CD4-positive, alpha-beta T cell (primary cell): ENCODE measurements at regions of chr11 and their contacts with region 1.

Region 1: DNA sequence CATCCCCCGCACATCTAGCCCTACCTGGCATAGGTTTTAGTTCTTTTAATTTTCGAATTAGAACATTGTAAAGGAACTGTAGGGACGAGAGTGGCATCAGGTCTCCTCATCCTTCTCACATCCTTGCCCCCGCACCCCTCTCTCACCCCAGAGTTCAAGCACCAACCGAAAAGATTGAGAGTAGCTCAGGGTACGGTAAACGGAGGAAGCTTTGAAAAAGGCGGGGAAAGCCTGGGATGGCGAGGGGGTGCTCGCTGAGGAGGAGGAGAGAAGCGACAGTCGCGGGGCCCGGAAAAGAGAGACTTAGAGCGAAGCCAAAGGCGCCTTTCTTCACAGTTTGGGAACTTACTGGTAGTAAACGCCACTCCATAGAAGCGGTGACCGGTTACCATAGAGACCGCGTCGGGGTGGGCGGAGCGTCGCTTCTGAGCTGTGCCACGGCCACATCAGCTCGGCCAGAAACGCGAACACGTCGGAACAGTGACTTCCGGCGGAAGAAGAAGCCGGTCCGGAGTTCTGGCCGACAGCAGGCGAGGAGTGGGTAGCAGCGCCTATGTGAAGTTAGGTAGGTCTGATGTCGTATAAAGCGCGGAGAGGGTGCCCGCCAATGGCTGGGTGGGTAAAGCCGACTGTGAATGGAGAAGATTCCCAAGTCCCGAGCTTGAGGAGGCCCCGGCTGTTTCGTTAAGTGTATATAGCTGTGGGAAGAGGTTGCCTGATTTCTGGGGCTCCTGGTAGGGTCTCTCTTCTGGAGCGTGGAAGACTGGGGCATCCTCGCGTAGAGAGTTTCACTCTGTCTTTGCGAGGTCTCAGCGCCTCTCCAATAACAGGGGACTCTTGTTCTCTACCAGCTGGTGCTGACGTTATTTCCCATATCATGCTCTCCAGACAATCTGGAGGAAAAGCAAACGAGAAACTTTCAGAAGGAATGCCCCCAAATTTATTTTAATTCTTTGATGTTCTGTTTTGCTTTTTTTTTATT is at the starts of genes DCDC1 and DNAJC24:
- DNase-seq: peak; percentile 90 to 97 (median 91)
- ATAC-seq: peak; percentile 94
- H3K4me3 ChIP-seq: peak within 1 kb of the TSS; percentile 73
- H3K4me3 Mint-ChIP-seq: peak within 1 kb of the TSS; percentile 98
- H3K27ac ChIP-seq: peak within 1 kb of the TSS; percentile 56 to 73
- H3K27ac Mint-ChIP-seq: peak within 1 kb of the TSS; percentile 78
- H3K4me1 ChIP-seq: peaks cover 20% of the 10 kb centered on the region
- H3K4me1 Mint-ChIP-seq: peaks cover 77% of the 10 kb centered on the region
- H3K27me3 ChIP-seq: no peaks in the 10 kb centered on the region
- H3K27me3 Mint-ChIP-seq: no peaks in the 10 kb centered on the region
- CTCF ChIP-seq: no peak
- total RNA-seq, gene DCDC1: 0.11 TPM in 1 of 2 experiments, not detected in the other
- total RNA-seq, gene DNAJC24: 6.5 to 7.5 TPM

Region 2: DNA sequence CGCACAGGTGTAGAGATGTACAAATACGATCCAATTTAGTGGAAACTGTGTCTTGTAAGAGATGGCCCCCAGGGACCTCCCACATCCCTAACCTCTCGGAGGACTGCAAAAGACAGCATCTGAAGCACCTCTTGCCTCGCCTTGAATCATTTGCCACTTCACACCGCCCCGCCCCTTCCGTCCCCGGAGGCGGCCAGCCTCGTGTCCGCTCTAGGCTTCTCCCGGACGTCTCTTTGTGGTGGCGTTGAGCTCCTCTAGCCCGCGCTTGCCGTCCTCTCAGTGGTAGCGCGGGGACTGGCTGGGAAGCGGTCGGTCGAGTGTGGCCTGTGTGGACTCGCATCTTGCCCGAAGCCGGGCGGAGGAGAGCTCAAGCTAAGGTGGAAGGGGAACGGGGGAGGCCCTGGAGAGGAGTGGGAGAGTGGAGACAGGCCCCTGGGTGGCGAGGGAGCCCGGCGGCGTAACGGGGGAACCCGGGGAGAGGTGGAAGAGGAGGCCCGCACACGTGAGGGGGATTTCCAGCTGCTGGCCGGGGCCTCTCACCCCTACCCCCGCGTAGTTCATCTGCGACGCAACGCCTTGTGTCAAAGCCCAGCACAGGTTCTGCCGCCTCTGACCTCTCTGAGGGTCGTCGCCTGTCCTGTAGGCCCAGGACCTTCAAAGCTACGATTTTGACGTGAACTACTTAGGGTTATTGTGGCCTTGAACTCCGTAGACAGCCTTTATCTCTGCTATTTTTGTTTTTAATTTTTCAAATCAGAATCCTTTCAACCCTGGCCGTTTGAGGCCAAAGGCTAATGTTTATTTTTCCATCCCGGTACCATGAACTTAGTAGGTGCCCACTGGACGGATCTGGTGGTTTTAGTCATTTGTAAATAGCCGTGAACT is 1046.6 kb before region 1 on chr11 and contains the start of gene ARL14EP:
- CTCF ChIA-PET with region 1: no interaction called
- POLR2A ChIA-PET with region 1: interaction called, 6 read pairs
- intact Hi-C with region 1: loop called in 1 of 2 experiments (anchors 5 kb)
- DNase-seq: peak; percentile 75 to 93 (median 86)
- ATAC-seq: peak; percentile 82
- H3K4me3 ChIP-seq: peak within 1 kb of the TSS; percentile 89
- H3K4me3 Mint-ChIP-seq: peak within 1 kb of the TSS; percentile 98
- H3K27ac ChIP-seq: peak within 1 kb of the TSS; percentile 70 to 81
- H3K27ac Mint-ChIP-seq: peak within 1 kb of the TSS; percentile 97
- H3K4me1 ChIP-seq: peaks cover 22% of the 10 kb centered on the region
- H3K4me1 Mint-ChIP-seq: peaks cover 54% of the 10 kb centered on the region
- H3K27me3 ChIP-seq: no peaks in the 10 kb centered on the region
- H3K27me3 Mint-ChIP-seq: peaks cover 17% of the 10 kb centered on the region
- CTCF ChIP-seq: no peak
- total RNA-seq, gene ARL14EP: 48.1 to 49.7 TPM

Region 3: DNA sequence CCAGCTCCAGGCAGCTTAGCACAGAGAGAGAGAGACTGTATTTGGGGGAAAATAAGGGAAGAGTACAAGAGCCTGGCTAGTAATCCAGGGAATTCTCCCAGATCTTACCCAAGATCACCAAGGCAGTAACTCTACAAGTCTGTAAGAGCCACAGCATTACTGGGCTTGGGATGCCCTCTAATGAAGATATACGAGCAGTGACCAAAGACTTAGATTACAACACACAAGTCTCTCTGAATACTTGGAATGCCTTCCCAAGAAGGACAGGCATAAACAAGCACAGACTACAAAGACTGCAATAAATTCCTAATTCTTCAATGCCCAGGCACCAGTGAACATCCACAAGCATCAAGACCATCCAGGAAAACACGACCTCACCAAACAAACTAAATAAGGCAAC is 17.7 kb after region 1 on chr11:
- CTCF ChIA-PET with region 1: no interaction called
- POLR2A ChIA-PET with region 1: interaction called, 3 read pairs
- intact Hi-C with region 1: loop called in 1 of 2 experiments (anchors 2 kb)
- DNase-seq: no peak
- ATAC-seq: no peak
- H3K4me3 ChIP-seq: no peak overlapping the region
- H3K4me3 Mint-ChIP-seq: no peak overlapping the region
- H3K27ac ChIP-seq: no peak overlapping the region
- H3K27ac Mint-ChIP-seq: no peak overlapping the region
- H3K4me1 ChIP-seq: peaks cover 5% of the 10 kb centered on the region
- H3K4me1 Mint-ChIP-seq: peaks cover 33% of the 10 kb centered on the region
- H3K27me3 ChIP-seq: no peaks in the 10 kb centered on the region
- H3K27me3 Mint-ChIP-seq: no peaks in the 10 kb centered on the region
- CTCF ChIP-seq: no peak

Region 4: DNA sequence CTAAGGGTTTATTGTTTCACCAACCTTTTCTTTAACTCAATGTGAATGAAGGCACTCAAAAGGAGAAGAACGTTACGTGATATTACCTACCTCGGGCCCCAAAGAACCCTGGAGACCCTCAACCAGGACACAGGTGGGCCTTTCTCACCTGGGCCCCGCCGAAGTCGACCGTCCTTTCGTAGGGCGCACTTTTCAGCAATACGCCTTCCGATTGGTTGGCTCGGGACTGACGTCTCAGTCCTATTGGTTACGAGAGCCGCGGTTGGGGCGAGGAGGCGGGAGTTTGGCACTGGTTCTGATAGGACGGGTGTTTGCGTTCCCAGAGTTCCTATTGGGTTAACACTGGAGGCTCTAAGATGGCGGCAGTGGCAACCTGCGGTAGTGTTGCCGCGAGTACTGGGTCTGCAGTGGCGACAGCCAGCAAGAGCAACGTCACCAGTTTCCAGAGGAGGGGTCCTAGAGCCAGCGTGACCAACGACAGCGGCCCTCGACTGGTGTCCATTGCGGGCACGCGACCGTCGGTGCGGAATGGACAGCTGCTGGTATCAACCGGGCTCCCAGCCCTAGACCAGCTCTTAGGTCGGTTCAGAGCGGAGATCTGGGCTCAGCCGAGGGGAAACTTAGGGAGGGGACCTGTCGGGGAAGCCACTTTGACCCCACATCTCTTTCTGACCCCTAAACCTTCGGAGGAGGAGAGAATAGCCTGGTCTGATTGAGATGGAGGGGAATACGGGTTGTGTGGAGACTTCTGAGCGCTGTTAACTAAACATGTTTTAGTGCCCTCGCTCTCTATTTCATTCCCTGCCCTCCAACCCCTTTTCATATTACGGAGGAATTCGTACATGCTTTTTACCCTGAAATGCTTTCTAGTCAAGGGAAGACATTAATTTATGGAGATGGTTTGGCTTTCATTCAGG is 140.0 kb after region 1 on chr11 and contains the starts of genes ELP4 and IMMP1L:
- CTCF ChIA-PET with region 1: no interaction called
- POLR2A ChIA-PET with region 1: interaction called, 4 read pairs
- intact Hi-C with region 1: loop called (anchors 5 to 10 kb)
- DNase-seq: peak; percentile 91 to 97 (median 93)
- ATAC-seq: peak; percentile 98
- H3K4me3 ChIP-seq: peak within 1 kb of the TSS; percentile 86
- H3K4me3 Mint-ChIP-seq: peak within 1 kb of the TSS; percentile 94
- H3K27ac ChIP-seq: peak within 1 kb of the TSS; percentile 82 to 87
- H3K27ac Mint-ChIP-seq: peak within 1 kb of the TSS; percentile 92
- H3K4me1 ChIP-seq: peaks cover 2% of the 10 kb centered on the region
- H3K4me1 Mint-ChIP-seq: peaks cover 63% of the 10 kb centered on the region
- H3K27me3 ChIP-seq: no peaks in the 10 kb centered on the region
- H3K27me3 Mint-ChIP-seq: no peaks in the 10 kb centered on the region
- CTCF ChIP-seq: no peak
- total RNA-seq, gene ELP4: 9.5 to 10.3 TPM
- total RNA-seq, gene IMMP1L: 6.0 to 6.9 TPM

Region 5: GRCh38 chr11:32583459-32584271 is 1214.0 kb after region 1 on chr11 and contains the start of gene EIF3M:
- CTCF ChIA-PET with region 1: no interaction called
- POLR2A ChIA-PET with region 1: no interaction called
- intact Hi-C with region 1: loop called in 1 of 2 experiments (anchors 10 kb)
- DNase-seq: peak; percentile 92 to 98 (median 95)
- ATAC-seq: peak; percentile 98
- H3K4me3 ChIP-seq: peak within 1 kb of the TSS; percentile 89
- H3K4me3 Mint-ChIP-seq: peak within 1 kb of the TSS; percentile 94
- H3K27ac ChIP-seq: peak within 1 kb of the TSS; percentile 84 to 87
- H3K27ac Mint-ChIP-seq: peak within 1 kb of the TSS; percentile 94
- H3K4me1 ChIP-seq: peaks cover 38% of the 10 kb centered on the region
- H3K4me1 Mint-ChIP-seq: peaks cover 52% of the 10 kb centered on the region
- H3K27me3 ChIP-seq: no peaks in the 10 kb centered on the region
- H3K27me3 Mint-ChIP-seq: no peaks in the 10 kb centered on the region
- CTCF ChIP-seq: no peak
- total RNA-seq, gene EIF3M: 260 to 264 TPM